IMR-90 (cell line): ENCODE measurements at regions of chr10 and their contacts with region 1.

Region 1: DNA sequence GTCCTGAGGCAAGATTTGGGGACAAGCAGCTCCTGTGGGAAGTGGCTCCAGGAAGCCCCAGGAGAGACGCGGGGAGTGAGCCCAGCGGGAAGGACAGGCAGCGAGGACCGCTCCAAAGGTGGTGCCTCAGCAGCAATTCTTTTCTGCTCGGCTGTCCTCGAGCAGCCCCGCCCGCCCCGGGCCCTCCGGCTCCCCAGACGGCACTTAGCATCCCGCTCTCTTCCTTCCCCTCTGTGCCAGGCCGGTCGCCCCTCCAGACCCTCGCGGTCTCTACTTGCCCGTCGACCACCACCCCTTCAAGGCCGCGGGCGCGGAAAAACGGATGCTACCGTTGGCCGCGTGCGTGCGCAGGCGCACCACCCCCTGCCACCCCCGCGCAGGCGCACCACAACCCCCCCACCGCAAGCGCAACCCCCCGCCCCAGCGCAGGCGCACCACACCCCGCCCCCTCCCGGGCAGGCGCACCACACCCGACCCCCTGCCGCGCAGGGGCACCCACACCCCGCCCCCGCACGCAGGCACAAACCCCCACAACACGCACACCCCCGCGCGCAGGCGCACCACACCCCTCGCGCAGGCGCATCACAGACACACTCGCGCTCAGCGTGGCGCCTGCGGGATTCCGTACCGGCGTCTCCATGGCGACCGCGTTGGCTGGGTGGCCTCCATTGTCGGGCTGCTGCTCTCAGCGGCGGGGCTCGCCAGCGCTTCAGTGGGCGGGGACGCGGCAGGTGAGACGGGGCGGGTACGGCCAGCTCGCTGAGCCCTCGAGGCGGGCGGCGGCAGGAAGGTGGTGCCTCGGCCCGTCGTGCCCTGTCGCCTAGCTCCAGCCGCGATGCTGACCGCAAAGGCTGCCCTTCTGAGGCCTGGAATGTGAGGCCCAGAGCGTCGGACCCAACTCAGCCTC is at the start of gene LRRC27:
- DNase-seq: peak; percentile 96
- ATAC-seq: peak; percentile 96
- H3K4me3 ChIP-seq: peak within 1 kb of the TSS; percentile 97
- H3K27ac ChIP-seq: peak within 1 kb of the TSS; percentile 93
- H3K4me1 ChIP-seq: peaks cover 6% of the 10 kb centered on the region
- H3K27me3 ChIP-seq: no peaks in the 10 kb centered on the region
- CTCF ChIP-seq: no peak
- POLR2A ChIP-seq: no peak
- RAD21 ChIP-seq: no peak
- total RNA-seq, gene LRRC27: 3.6 and 3.8 TPM in 2 replicates

Region 2: DNA sequence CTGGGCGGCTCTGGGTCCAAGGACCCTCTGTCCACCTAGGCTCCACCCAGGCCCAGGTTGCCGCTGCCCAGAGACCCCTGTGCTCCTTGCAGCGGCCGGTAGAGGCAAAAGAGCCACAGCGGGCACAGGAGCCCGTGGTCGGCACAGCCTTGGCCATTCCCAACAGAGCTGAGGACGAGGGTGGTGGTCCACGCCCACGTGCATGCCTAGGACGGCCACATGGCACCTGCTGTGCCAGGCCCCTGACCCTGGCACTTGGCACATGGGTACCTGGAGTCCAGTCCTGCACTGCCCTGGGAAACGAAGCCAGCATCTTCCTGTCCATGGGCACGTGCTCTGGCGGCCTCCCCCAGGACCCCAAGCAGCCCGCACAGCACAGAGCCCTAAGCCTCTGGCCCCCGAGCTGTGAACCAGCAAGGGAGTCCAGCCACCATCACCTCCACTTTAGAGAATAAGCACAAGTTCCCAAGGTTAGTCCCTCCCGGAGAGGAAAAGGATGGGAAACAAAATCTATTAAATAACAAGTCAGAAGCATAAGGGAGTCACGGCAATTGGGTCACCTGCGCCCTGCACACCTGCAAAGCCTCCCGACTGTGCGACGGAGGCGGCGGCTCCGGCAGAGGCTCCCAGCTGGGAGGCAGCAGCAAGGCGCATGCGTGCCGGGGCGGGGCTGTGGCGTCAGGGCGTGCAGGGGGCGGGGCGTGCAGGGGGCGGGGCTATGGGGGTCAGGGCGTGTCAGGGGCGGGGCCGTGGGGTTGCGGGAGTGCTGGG is 83.1 kb before region 1 on chr10:
- CTCF ChIA-PET with region 1: interaction called, 4 read pairs
- POLR2A ChIA-PET with region 1: no interaction called
- dilution Hi-C with region 1: loop called (anchors 25 kb)
- in situ Hi-C with region 1: no loop called
- intact Hi-C with region 1: no loop called
- DNase-seq: no peak
- ATAC-seq: peak; percentile 75
- H3K4me3 ChIP-seq: peak overlapping the region; percentile 20; the same call in 1 of the 2 replicates
- H3K27ac ChIP-seq: no peak overlapping the region
- H3K4me1 ChIP-seq: no peaks in the 10 kb centered on the region
- H3K27me3 ChIP-seq: no peaks in the 10 kb centered on the region; the same call in 1 of the 2 replicates
- CTCF ChIP-seq: no peak
- POLR2A ChIP-seq: no peak
- RAD21 ChIP-seq: no peak

Region 3: DNA sequence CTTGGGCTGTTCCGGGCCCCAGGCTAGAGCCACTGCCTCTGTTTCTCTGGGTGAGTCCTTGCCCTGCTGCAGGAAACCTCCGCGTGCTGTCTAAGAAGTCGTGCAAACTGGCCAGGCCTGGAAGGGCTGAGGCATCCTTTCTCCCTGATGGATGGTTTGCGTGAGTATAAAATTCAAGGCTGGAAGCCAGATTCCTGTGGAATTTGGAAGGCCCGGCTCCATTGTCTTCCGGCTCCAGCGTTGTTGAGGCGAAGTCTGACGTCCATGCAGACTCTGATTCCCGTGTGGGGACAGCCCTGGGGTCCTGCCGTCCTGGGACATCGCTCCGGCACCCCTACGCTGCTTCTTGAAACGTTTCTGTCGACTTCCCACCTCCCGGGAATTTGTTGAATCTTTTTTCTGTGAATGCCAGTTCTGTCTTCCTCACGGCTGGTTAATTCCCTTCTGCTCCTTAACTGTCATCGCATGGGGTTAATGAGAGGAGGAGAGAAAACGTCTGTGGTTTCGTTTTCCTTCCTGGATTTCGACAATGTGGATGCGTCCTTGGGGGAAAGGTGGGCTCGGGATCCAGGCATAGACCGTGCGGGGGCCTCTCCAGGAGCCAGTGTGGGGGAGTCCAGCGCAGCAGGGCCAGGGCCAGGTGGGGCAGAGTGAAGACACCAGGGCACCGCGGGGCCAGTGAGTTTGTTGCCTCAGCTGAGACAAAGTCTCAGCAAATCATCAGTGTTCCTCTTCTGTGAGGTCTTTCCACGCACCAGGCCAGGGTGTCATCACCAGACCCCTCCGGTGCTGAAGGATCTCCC is 643.9 kb after region 1 on chr10:
- CTCF ChIA-PET with region 1: no interaction called
- POLR2A ChIA-PET with region 1: no interaction called
- dilution Hi-C with region 1: no loop called
- in situ Hi-C with region 1: no loop called
- intact Hi-C with region 1: no loop called
- DNase-seq: no peak
- ATAC-seq: no peak; the same call in 1 of the 2 replicates
- H3K4me3 ChIP-seq: no peak overlapping the region
- H3K27ac ChIP-seq: no peak overlapping the region
- H3K4me1 ChIP-seq: no peaks in the 10 kb centered on the region
- H3K27me3 ChIP-seq: peaks cover 45% of the 10 kb centered on the region
- CTCF ChIP-seq: no peak
- POLR2A ChIP-seq: no peak
- RAD21 ChIP-seq: no peak